Esophagus squamous epithelium (tissue), 5 donors: ENCODE measurements at regions of chr17 and their contacts with region 1.

Region 1: DNA sequence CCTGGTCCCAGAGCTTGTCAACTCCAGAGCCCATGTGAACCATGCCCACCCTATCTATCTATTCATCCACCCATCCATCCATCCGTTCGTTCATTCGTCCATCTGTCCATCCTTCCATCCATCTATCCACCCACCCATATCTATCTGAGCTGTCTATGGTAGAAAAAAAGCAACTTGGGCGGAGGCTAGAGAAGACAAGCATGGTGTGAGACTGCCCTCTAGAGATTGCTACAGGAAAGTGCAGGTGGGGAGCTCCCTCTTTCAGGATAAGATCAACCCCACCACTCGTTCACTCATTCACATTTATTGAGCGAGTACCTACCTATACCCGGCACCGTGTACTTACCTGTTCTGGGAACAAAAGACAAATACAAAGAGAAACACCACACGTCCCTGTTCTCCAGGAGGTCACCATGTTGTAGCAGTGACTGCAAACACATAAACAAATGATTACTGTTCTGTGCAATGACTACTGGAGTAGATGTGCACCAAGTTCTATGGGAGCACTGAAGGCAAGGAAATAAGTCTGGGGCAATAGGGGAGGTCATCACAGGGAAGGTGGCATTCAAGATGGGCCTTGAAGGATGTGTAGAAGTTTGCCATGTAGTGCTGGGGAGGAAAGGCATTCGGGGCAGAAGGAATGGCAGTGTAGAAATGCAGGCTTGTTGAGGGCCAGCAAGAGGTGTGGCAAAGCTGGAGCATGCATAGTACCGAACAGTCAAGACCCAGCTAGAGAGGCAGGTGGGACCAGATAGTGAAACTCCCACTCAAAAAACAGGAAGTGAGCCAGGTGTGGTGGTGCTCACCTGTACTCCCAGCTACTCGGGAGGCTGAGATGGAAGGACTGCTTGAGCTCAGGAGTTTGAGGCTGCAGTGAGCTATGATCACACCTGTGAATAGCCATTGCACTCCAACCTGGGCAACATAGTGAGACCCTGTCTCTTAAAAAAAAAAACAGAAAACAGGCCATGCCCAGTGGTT is 13.4 kb upstream of the ATP5MC1 start:
- DNase-seq: no peak
- H3K4me3 ChIP-seq: no peak overlapping the region
- H3K27ac ChIP-seq: no peak overlapping the region
- H3K4me1 ChIP-seq: no peaks in the 10 kb centered on the region
- H3K27me3 ChIP-seq: peaks cover 0 to 33% (median 0%) of the 10 kb centered on the region in 4 donors
- CTCF ChIP-seq: peak; percentile 72 to 93 (median 88)
- POLR2A ChIP-seq: no peak

Region 2: DNA sequence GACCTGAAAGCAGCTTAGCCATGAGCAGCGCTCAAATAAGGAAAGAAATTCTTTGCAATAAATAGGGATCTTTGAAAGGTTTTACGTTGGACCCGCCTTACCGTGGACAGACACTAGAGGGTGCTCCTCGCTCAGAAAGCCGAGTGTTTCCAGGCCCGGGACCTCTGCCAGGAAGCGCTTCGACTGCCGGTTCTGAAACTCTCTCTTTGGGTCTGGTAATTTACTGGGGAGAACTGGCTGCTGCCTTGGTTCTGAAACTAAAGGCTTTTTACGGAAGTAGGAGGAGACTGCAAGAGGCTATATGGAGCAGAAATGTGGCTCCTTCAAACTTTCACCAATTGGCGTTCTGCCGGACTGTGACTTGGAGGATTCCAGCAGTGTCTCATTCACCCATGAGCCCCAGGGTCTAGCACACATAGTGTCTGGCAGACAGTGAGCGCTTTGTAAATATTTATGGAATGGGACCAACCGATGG is 207.5 kb before region 1 on chr17:
- intact Hi-C with region 1: loop called (anchors 5 kb)
- DNase-seq: no peak
- H3K4me3 ChIP-seq: peak overlapping the region in 3 of 4 donors; percentile 16 to 56 (median 31)
- H3K27ac ChIP-seq: no peak overlapping the region
- H3K4me1 ChIP-seq: peaks cover 0 to 11% (median 4%) of the 10 kb centered on the region in 3 donors
- H3K27me3 ChIP-seq: peaks cover 0 to 88% (median 0%) of the 10 kb centered on the region in 4 donors
- CTCF ChIP-seq: peak; percentile 59 to 86 (median 80)
- POLR2A ChIP-seq: no peak

Region 3: DNA sequence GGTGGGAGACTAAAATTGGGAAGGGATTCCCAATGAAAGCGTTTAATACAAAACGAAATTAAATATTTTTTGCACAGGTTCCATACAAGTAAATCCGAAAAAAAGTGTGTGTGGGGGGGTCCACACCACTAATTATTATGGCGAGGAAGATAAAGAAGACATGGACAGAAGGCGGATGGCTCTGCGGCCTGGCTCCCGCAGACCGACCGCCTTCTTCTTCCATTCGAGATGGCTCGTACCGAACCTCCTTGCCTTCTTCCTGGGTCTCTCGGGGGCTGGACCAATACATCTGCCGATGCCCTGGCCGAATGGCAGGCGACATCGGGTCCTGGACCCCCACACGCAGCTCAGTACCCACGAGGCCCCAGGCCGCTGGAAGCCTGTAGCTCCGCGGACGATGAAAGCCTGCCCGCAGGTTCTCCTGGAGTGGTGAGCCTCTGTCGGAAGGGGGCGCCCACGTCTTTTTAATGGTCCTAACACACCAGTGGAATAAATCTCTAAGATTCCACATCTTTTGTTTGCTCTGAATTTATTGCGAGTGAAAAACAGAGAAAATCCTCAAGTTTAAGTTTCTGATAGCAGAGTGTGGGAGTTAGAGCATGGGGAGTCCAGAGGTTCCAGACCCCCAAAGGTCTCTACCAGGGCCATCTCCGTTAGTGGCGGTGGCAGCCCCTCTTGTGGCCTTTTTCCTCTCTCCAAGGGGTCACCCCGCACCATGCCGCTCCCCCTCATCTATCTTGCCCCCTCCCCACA is 154.8 kb before region 1 on chr17:
- intact Hi-C with region 1: loop called (anchors 5 kb)
- DNase-seq: no peak
- H3K4me3 ChIP-seq: peak overlapping the region in 1 of 4 donors; percentile 26
- H3K27ac ChIP-seq: no peak overlapping the region
- H3K4me1 ChIP-seq: peaks cover 7 to 52% (median 36%) of the 10 kb centered on the region in 3 donors
- H3K27me3 ChIP-seq: peaks cover 70 to 100% (median 93%) of the 10 kb centered on the region in 4 donors
- CTCF ChIP-seq: peak; percentile 33 to 67 (median 59)
- POLR2A ChIP-seq: no peak

Region 4: GRCh38 chr17:48804925-48805411 is 74.2 kb before region 1 on chr17:
- intact Hi-C with region 1: loop called (anchors 2 kb)
- DNase-seq: no peak
- H3K4me3 ChIP-seq: no peak overlapping the region
- H3K27ac ChIP-seq: no peak overlapping the region
- H3K4me1 ChIP-seq: peaks cover 0 to 24% (median 5%) of the 10 kb centered on the region in 3 donors
- H3K27me3 ChIP-seq: peaks cover 0 to 88% (median 1%) of the 10 kb centered on the region in 4 donors
- CTCF ChIP-seq: peak; percentile 77 to 96 (median 88)
- POLR2A ChIP-seq: no peak

Region 5: GRCh38 chr17:48954300-48954755 is 75.1 kb after region 1 on chr17:
- intact Hi-C with region 1: no loop called
- DNase-seq: no peak
- H3K4me3 ChIP-seq: no peak overlapping the region
- H3K27ac ChIP-seq: no peak overlapping the region
- H3K4me1 ChIP-seq: no peaks in the 10 kb centered on the region
- H3K27me3 ChIP-seq: peaks cover 0 to 81% (median 0%) of the 10 kb centered on the region in 4 donors
- CTCF ChIP-seq: no peak
- POLR2A ChIP-seq: no peak

Region 6: DNA sequence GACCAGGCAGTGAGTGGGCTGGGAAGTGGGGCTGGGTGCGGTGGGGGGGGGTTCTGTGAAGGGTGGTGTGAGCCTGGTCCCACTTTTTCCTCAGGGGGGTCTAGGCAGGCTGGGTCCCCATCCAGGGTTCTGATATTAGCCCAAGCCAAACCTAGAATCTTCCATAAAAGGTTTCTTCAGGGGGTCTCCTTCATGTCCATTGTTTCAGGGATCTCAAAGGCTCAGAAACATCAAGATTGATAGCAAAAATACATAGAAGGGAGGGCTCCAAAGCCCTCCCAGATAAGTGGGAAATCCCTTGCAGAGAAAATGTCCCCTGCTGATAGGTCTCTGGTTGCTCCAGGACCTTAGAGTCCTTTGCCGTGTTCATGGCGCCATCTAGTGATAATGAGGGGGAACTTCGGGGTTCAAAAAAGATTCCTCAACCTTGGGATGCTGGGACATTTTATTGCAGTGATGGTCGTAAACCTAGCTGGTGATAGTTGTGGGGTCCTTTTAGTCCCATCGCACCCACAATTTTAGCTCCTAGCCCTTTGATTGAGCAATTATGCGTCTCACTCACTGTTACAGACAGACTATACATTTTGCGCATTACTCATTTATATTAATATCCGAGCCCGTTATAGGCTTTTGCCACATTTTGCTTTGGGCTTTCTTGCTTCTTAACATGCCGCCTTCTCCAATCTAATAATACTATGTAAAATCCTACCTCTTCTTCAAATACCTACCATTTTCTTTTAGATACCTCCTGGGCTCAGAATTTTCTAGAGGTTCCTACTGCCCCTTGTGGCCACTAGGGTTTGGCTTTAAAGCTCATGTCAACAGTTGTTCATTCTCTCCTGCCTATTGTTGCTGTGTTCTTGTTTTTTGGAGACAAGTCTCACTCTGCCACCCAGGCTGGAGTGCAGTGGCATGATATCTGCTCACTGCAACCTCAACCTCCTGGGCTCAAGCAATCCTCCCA is 153.0 kb after region 1 on chr17:
- intact Hi-C with region 1: loop called (anchors 10 kb)
- DNase-seq: no peak
- H3K4me3 ChIP-seq: no peak overlapping the region
- H3K27ac ChIP-seq: no peak overlapping the region
- H3K4me1 ChIP-seq: peaks cover 0 to 4% (median 3%) of the 10 kb centered on the region in 3 donors
- H3K27me3 ChIP-seq: peaks cover 0 to 70% (median 0%) of the 10 kb centered on the region in 4 donors
- CTCF ChIP-seq: peak; percentile 47 to 75 (median 58)
- POLR2A ChIP-seq: no peak